Caco-2 (cell line): ENCODE measurements at regions of chr10 and their contacts with region 1.

Region 1: DNA sequence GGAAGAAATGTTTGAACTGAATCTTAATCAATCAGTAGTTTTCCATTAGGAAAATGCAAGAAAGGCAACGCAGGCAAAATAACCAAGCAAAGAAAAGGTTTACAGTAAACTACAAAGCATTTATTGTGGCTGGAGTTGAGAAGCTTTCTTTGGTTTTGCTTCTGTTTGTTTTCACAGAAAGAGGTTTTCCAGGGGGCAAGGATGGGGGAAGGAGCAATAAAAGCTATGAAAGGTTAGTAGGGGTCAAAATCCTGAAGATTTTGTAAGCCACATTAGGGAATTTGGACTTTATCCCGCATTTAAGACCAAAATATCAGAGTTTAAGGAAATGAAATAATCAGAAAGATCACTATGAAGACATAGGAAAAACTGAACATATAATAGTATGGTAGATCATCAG is 51.1 kb downstream of the NT5C2 start:
- DNase-seq: no peak
- H3K4me3 ChIP-seq: no peak overlapping the region
- H3K4me3 Mint-ChIP-seq: no peak overlapping the region
- H3K27ac Mint-ChIP-seq: no peak overlapping the region
- H3K4me1 ChIP-seq: peaks cover 6% of the 10 kb centered on the region; the same call in 1 of the 2 replicates
- H3K4me1 Mint-ChIP-seq: peaks cover 5% of the 10 kb centered on the region
- H3K27me3 ChIP-seq: no peaks in the 10 kb centered on the region
- H3K27me3 Mint-ChIP-seq: no peaks in the 10 kb centered on the region
- CTCF ChIP-seq: no peak

Region 2: GRCh38 chr10:103154521-103155299 is 12.8 kb after region 1 on chr10:
- CTCF ChIA-PET with region 1: no interaction called
- POLR2A ChIA-PET with region 1: interaction called, 16 read pairs
- intact Hi-C with region 1: no loop called
- DNase-seq: no peak
- H3K4me3 ChIP-seq: no peak overlapping the region
- H3K4me3 Mint-ChIP-seq: no peak overlapping the region
- H3K27ac Mint-ChIP-seq: no peak overlapping the region
- H3K4me1 ChIP-seq: peaks cover 23% of the 10 kb centered on the region
- H3K4me1 Mint-ChIP-seq: peaks cover 21% of the 10 kb centered on the region
- H3K27me3 ChIP-seq: no peaks in the 10 kb centered on the region
- H3K27me3 Mint-ChIP-seq: no peaks in the 10 kb centered on the region
- CTCF ChIP-seq: no peak